ENCODE measurements at regions of chr17 and their contacts with region 1.

Region 1: DNA sequence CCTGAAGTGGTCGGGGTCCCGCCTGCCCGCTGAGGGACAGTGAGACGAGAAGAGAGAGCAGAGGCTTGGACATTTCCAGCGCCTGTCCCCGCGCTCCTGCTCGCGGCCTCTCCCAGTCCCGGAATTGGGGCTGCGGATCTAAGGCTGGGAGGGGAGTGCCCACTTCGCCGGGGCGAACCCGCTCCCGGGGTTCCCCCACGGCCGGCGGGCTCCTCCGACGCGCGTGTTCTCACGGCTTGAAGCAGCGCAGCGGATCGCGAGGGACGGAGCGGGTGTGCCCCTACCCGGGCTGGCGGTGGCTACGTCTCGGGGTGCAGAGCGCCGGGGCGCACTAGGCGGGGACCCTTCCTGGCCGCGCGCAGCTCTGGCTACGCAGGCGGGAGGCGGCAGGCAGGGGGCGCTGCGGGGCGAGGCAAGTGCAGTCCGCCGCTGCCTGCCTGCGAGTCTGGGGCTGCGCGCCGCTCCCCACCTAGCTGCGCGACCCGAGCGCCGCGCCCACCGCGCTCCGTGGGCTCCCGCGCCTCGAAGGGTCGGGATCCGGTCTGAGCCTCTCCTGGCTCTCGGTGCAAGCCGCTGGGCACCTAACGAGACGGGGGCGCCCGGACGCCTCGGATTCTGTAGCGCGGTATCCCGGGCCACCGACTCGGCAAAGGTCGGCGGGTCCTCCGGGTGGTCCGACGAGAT is 1.2 kb downstream of the NGFR start:
- DNase-seq: peak; percentile 96
- H3K4me3 ChIP-seq: peak overlapping the region; percentile 54 to 63
- H3K27ac ChIP-seq: no peak overlapping the region; a peak in 1 of 4 replicates
- H3K4me1 ChIP-seq: peaks cover 5 to 42% of the 10 kb centered on the region in 2 experiments; a peak in 2 of 4 replicates
- H3K27me3 ChIP-seq: peaks cover 80% of the 10 kb centered on the region
- CTCF ChIP-seq: peak; percentile 81
- EP300 ChIP-seq: no peak
- RAD21 ChIP-seq: peak; percentile 73

Region 2: DNA sequence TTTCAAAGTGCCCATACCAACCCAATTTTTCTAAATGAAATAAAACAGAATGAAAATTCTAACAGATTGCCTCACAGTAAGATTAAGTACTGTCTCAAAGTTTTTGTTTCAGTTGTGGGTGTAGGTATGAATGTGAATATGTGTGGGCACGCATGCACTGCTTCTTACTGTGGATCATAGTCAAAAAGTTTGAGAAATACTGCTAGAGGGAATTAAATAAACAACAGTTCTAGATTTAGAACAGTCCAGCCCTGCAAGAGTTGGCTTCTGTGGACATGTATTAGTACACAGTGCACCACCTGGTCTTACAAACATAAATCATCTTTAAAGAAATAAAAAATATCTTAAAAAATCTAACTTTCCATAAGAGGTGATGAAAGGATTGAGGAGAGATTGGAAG is 142.7 kb before region 1 on chr17:
- CTCF ChIA-PET with region 1: no interaction called
- POLR2A ChIA-PET with region 1: no interaction called
- DNase-seq: no peak
- H3K4me3 ChIP-seq: no peak overlapping the region
- H3K27ac ChIP-seq: no peak overlapping the region
- H3K4me1 ChIP-seq: no peaks in the 10 kb centered on the region
- H3K27me3 ChIP-seq: no peaks in the 10 kb centered on the region
- CTCF ChIP-seq: no peak
- EP300 ChIP-seq: no peak
- RAD21 ChIP-seq: no peak

Region 3: DNA sequence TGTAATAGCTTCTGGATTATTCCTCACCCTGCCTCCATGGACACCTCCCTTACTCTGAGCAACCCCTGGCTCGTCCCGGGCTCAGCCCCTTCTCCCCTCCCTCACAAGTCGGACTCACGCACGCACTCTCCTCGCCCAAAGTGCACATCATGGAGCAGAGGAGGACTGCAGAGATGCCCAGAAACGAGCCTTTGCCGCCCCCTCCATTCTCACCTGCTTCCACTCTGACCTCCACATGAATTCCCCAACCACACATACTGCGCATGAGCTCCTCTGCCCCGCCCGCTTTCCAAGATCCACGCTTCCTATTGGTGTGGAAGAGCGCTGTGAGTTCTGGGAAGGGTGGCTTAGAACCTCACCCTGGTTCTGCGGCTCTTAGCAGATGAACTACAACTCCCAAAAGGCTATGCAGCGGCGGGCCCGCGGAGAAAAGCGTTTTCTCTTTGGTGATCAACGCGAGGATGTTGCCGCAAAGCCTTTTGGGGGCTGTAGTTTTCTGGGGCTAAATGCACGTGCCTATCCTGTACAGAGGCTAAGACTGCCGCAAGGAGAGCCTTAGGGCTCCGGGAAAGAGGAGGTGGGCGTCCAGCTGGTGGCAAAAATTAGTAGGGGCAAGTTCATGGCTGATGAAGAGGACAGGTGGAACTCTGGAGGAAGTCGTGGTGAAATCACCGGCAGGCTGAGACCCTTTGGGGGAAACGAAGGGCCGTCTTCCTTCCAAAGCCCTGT is 81.5 kb before region 1 on chr17 and contains the start of gene PHB1:
- CTCF ChIA-PET with region 1: interaction called, 37 read pairs
- POLR2A ChIA-PET with region 1: no interaction called
- DNase-seq: peak; percentile 97
- H3K4me3 ChIP-seq: peak within 1 kb of the TSS; percentile 86 to 87
- H3K27ac ChIP-seq: peak within 1 kb of the TSS in 1 of 2 experiments; percentile 48; a peak in 1 of 4 replicates
- H3K4me1 ChIP-seq: peaks cover 0 to 11% of the 10 kb centered on the region in 2 experiments; a peak in 2 of 4 replicates
- H3K27me3 ChIP-seq: no peaks in the 10 kb centered on the region
- CTCF ChIP-seq: no peak
- EP300 ChIP-seq: no peak
- RAD21 ChIP-seq: no peak
- polyA plus RNA-seq, gene PHB1: 379 and 477 TPM in 2 replicates

Region 4: DNA sequence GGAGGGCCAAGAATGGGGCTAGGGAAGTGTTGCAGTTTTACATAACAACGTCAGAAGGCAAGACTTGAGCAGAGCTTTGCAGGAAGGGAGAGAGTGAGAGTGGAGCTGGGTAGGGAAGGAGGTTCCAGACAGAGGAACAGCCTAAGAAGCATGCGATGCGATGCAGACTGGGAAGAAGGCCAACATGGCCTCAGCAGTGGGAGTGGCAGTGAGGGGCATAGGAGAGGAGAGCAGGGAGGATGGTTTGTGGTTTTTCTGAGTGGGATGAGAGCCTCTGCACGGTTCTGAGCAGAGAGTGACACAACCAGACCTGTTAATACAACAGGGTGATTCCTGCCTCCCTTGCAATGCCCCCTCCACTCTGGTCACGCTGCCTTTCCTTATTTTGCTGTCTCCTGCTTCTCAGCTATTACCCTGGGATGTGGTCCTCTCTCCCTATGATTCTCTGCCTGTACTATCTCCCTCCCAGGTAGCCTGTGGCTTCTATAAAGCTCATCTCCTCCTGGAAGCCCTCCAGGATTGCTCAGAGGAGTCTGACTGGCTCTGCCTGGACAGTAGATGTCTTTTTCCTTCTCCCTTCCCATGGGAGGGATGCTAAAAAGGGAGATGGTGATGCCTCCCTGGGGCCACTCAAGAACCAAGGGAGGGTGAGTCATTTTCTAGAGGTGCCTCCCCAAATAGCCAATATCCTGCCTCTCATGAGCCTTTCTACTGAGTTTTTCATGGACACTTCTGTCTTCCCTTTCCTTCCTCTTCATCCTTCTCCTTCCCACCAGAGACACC is 40.0 kb before region 1 on chr17:
- CTCF ChIA-PET with region 1: interaction called, 14 read pairs
- POLR2A ChIA-PET with region 1: no interaction called
- DNase-seq: no peak
- H3K4me3 ChIP-seq: no peak overlapping the region
- H3K27ac ChIP-seq: peak overlapping the region in 1 of 2 experiments; percentile 30; a peak in 1 of 4 replicates
- H3K4me1 ChIP-seq: peaks cover 18% of the 10 kb centered on the region in 2 experiments; a peak in 3 of 4 replicates
- H3K27me3 ChIP-seq: peaks cover 21% of the 10 kb centered on the region
- CTCF ChIP-seq: no peak
- EP300 ChIP-seq: peak in 1 of 2 experiments; percentile 33; a peak in 1 of 4 replicates
- RAD21 ChIP-seq: peak; percentile 2; the same call in 1 of the 2 replicates

Region 5: DNA sequence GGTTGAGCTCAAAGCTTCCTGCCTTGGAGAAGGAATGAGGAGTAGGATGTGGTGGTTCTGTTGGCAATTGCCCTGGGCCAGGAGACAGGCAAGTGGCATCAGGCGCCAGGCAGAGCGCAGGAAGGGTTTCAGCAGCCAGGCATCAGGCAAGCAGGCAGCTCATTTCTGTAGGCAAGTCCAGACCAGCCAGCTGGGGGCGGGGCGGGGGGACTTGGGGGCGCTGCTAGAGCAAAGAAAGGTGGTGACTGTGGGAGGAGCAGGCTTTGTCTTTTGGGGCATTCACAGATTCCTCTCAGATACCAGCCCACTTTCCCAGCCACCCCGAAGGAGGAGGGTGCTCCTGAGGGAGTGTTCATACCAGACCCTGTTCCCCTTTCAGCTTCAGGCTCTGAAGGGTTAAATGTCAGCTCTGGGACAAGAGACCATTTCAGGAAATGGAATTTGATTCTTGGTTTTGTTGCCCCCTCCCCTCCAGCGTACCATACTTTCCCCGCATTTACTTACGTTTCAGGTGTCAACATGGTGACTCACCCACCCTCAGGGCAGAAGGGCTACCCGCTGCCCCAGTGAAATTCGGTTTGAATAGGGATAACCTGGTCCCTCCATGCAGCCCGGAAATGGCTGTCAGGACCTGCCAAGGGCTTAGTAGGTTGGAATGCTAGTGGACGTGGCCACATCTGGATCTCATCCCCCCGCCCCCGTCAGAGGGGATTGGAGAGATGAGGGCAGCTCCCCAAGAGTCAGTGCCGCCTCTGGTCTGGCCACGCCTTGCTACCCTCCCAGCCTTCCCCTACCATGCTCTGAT is 11.9 kb after region 1 on chr17:
- CTCF ChIA-PET with region 1: interaction called, 453 read pairs
- POLR2A ChIA-PET with region 1: interaction called, 12 read pairs
- DNase-seq: peak; percentile 59
- H3K4me3 ChIP-seq: no peak overlapping the region
- H3K27ac ChIP-seq: peak overlapping the region in 1 of 2 experiments; percentile 82; a peak in 1 of 4 replicates
- H3K4me1 ChIP-seq: peaks cover 4 to 57% of the 10 kb centered on the region in 2 experiments; a peak in 1 of 4 replicates
- H3K27me3 ChIP-seq: peaks cover 25% of the 10 kb centered on the region
- CTCF ChIP-seq: no peak
- EP300 ChIP-seq: no peak
- RAD21 ChIP-seq: no peak

Region 6: DNA sequence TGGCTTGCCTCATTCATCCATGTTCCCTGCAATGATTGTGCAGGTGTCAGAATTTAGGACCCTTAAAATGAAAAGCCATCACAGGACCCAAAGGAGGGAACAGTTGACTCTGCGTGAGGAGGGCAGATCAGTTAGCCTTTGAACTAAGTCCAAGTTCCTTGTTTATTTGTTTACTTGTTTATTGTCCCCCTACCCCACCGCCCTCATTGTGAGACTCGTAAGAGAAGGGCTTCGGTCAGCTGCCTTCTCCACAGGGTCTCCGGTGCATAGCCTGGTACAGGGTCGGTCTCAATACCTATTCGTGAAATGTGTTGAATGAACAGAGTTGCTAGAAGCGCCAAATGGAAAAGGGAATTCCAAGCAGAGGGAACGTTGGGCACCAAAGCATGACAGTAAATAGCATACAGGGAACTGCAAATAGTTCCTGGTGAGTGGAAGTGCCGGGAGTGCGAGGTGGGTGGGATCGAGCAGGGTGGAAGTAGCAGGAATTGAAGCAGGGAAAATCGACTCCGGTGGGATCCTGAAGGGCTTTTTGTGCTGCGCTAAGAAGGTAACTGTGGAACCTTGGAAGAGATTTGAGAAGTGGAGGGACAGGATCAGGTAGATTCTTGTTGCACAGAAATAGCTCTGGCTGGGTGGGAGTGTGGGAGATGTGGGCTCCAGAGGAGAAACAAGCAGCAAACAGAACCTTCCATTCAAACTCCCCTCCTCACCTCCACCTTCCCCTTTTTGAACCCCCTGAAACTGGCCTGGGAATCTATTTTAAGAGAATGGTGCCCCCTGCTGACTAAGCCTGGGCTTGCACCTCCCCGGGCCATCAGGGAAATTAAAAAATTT is 198.7 kb after region 1 on chr17:
- CTCF ChIA-PET with region 1: interaction called, 15 read pairs
- POLR2A ChIA-PET with region 1: no interaction called
- DNase-seq: peak; percentile 82
- H3K4me3 ChIP-seq: no peak overlapping the region; a peak in 1 of 4 replicates
- H3K27ac ChIP-seq: no peak overlapping the region
- H3K4me1 ChIP-seq: peaks cover 0 to 2% of the 10 kb centered on the region in 2 experiments; a peak in 1 of 4 replicates
- H3K27me3 ChIP-seq: no peaks in the 10 kb centered on the region
- CTCF ChIP-seq: peak; percentile 100
- EP300 ChIP-seq: no peak
- RAD21 ChIP-seq: peak; percentile 98

Measured in SK-N-SH (cell line).